ENCODE measurements at regions of chr1 and their contacts with region 1.

Region 1: GRCh38 chr1:1059494-1060280 is 14.4 kb downstream of the RNF223 start:
- DNase-seq: peak; percentile 94
- H3K4me3 Mint-ChIP-seq: peak overlapping the region; percentile 83
- H3K27ac Mint-ChIP-seq: no peak overlapping the region
- H3K4me1 Mint-ChIP-seq: peaks cover 28% of the 10 kb centered on the region
- H3K27me3 Mint-ChIP-seq: peaks cover 28% of the 10 kb centered on the region

Region 2: DNA sequence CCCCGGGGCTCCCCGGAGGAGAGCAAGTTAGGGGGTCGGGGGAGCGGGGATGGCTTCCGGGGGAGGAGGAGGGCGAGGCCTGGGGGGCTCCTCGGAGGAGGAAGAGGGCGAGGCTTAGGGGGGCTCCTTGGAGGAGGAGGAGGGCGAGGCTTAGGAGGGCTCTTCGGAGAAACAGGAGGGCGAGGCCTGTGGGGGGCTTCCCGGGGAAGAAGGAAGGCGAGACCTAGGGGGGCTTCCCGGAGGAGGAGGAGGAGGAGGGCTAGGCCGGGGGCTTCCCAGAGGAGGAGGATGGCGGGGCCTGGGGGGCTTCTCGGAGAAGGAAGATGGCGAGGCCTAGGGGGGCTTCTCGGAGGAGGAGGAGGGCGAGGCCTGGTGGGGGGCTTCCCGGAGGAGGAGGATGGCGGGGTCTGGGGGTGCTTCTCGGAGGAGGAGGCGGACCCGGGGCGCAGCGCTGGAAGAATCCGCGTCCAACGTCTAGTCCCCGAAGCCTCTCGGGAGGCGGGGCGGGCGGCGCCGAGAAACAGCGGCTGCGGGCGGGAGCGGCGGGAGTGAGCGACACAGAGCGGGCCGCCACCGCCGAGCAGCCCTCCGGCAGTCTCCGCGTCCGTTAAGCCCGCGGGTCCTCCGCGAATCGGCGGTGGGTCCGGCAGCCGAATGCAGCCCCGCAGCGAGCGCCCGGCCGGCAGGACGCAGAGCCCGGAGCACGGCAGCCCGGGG is 99.5 kb before region 1 on chr1 and contains the start of gene KLHL17:
- CTCF ChIA-PET with region 1: no interaction called
- POLR2A ChIA-PET with region 1: no interaction called
- intact Hi-C with region 1: loop called (anchors 10 kb)
- DNase-seq: peak; percentile 88
- H3K4me3 Mint-ChIP-seq: peak within 1 kb of the TSS; percentile 92
- H3K27ac Mint-ChIP-seq: no peak within 1 kb of the TSS
- H3K4me1 Mint-ChIP-seq: peaks cover 16% of the 10 kb centered on the region
- H3K27me3 Mint-ChIP-seq: no peaks in the 10 kb centered on the region
- total RNA-seq, gene KLHL17: 25.8 to 30.6 TPM

Region 3: DNA sequence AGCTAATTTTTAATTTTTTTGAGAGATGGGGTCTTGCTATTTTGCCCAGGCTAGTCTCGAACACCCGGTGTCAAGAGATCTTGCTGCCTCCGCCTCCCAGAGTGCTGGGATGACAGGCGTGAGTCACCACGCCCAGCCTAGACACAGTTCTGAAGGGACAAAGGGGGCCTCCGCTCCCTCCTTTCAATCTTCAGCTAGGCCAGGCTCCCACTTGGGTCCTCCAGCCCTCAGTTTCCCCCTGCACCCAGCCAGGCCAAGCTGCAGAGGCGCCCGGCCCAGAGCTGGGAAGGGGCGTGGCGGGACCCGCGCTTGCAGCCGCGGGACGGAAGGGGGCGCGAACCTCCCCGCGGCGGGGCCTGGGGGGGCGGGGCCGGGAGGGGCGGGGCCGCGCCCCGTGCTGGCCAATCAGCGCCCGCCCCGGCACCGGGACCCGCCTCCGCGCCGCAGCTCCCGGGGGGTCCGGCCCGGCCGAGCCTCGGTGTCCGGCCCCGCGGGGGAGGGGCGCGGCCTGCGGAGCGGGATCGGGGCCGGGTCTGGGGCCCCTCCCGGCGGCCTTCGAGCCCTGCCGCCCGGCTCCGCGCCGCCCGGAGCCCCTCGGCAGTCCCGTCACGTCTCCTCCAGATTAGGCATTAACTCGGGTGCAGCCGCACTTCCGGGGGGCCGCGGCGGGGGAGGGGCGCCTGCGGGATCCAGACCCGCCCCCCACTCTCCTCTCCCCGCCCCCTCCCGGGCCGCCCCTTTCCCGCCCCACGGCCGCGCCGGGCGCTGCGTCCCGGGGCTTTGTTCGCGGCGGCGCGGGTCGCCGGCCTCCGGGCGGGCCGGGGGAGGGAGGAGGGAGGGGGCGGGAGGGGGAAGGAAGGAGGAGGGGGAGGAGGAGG is 40.3 kb before region 1 on chr1:
- CTCF ChIA-PET with region 1: interaction called, 6 read pairs
- POLR2A ChIA-PET with region 1: no interaction called
- intact Hi-C with region 1: loop called (anchors 5 kb)
- DNase-seq: peak; percentile 83
- H3K4me3 Mint-ChIP-seq: peak overlapping the region; percentile 62
- H3K27ac Mint-ChIP-seq: no peak overlapping the region
- H3K4me1 Mint-ChIP-seq: peaks cover 8% of the 10 kb centered on the region
- H3K27me3 Mint-ChIP-seq: peaks cover 9% of the 10 kb centered on the region

Region 4: DNA sequence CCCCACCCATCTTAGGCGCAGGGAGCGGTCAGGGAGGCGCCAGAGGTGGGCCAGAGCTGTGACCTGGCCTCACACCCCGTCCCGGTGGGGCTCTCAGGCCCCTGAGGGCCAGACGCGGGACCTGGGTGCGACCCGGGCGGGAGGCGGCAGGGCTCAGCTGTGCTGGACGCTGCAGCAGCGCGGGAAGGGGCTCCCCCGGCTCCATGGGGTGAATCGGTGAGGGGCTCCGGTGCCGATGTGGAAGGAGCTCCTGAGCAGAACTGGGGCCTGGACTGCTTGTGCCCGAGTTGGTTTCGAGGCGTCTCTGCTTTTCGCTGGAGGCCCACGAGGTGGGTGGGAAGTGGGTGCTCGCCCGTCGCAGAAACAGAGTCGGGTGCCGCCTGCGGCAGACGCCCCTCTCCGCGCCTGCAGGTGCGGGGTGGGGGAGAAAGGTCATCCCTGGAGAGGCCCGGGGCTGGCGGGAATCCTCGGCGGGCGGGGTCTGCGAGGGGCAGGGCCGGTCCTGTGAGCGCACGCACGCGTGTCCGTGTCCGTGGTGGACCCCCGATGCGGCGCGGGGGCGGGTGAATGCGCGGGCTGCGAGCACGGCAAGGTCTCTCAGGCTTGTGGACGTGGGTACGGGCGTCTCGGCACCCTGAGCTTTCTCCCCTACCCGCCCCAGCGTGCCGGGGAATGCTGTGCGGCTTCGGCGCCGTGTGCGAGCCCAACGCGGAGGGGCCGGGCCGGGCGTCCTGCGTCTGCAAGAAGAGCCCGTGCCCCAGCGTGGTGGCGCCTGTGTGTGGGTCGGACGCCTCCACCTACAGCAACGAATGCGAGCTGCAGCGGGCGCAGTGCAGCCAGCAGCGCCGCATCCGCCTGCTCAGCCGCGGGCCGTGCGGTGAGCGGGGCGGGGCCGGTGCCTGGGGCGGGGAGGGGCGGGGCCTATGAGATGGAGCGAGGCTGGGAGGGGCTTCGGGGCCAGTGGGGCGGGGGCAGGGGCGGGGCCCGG is 19.4 kb before region 1 on chr1:
- CTCF ChIA-PET with region 1: interaction called, 15 read pairs
- POLR2A ChIA-PET with region 1: interaction called, 11 read pairs
- intact Hi-C with region 1: loop called (anchors 1 kb)
- DNase-seq: peak; percentile 90
- H3K4me3 Mint-ChIP-seq: peak overlapping the region; percentile 55
- H3K27ac Mint-ChIP-seq: no peak overlapping the region
- H3K4me1 Mint-ChIP-seq: peaks cover 15% of the 10 kb centered on the region
- H3K27me3 Mint-ChIP-seq: peaks cover 28% of the 10 kb centered on the region

Region 5: DNA sequence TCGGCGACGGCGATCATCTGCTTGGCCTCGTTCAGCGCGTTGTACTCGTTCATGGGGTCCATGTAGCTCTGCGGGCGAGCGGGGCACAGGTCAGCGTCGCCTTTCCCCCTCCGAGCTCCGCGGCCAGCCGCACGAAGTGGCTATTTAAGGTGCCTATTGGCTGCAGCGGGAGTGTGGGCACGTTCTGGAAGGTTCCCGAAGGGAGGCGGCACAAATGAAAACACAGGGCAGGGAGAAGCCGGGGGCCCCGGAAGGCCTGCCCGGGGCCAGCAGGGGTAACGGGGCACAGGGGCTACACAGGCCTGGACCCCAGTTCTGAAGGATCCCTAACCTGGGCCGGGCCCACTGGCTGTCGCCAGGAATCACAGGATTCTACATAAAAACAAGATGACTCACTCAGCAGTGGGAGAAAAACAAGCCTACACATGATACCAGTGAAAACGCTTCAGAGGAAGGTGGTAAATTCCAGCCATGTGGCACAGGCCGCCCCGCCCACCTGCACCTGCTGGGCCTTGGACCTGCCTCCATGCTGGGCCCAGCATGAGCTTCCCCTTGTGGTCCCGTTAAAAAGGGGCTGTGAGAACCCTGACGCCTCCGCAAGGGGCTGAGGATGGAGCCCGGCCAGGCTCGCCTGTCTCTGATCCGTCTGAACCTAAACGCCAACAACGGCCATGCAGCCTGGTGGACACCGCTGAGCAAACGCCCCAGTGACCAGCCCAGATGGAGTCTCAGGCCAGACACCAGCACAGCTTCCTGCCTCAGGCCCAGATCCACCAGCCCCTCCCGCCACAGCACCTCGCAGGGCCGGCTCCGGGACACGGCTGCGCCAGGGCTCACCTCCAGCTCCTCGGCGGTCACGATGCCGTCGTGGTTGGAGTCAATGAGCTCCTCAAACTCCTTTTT is 158.2 kb after region 1 on chr1:
- CTCF ChIA-PET with region 1: no interaction called
- POLR2A ChIA-PET with region 1: interaction called, 3 read pairs
- intact Hi-C with region 1: loop called (anchors 5 kb)
- DNase-seq: peak; percentile 84
- H3K4me3 Mint-ChIP-seq: peak overlapping the region; percentile 78
- H3K27ac Mint-ChIP-seq: peak overlapping the region; percentile 100
- H3K4me1 Mint-ChIP-seq: peaks cover 62% of the 10 kb centered on the region
- H3K27me3 Mint-ChIP-seq: no peaks in the 10 kb centered on the region

Region 6: DNA sequence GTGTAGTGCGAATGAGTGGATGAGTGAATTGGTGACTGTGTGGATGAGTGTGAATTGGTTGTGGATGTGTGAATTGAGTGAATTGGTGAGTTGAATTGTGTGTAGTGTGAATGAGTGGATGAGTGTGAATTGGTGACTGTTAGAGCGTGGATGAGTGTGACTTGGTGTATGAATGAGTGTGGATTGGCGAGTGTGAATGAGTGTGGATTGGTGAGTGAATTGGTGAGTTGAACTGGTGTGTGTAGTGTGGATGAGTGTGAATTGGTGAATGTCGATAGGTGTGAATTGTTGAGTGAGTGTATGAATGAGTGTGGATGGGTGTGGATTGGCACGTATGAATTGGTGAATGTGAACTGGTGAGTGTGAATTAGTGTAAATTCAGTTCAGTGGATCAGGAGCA is 307.6 kb after region 1 on chr1:
- CTCF ChIA-PET with region 1: no interaction called
- POLR2A ChIA-PET with region 1: no interaction called
- intact Hi-C with region 1: no loop called
- DNase-seq: no peak
- H3K4me3 Mint-ChIP-seq: no peak overlapping the region
- H3K27ac Mint-ChIP-seq: no peak overlapping the region
- H3K4me1 Mint-ChIP-seq: peaks cover 5% of the 10 kb centered on the region
- H3K27me3 Mint-ChIP-seq: no peaks in the 10 kb centered on the region

Region 7: GRCh38 chr1:1471389-1472052 is 411.8 kb after region 1 on chr1 and contains the start of gene ATAD3B:
- CTCF ChIA-PET with region 1: no interaction called
- POLR2A ChIA-PET with region 1: no interaction called
- intact Hi-C with region 1: no loop called
- DNase-seq: peak; percentile 97
- H3K4me3 Mint-ChIP-seq: peak within 1 kb of the TSS; percentile 80
- H3K27ac Mint-ChIP-seq: peak within 1 kb of the TSS; percentile 49
- H3K4me1 Mint-ChIP-seq: peaks cover 26% of the 10 kb centered on the region
- H3K27me3 Mint-ChIP-seq: no peaks in the 10 kb centered on the region
- total RNA-seq, gene ATAD3B: 35.4 to 36.3 TPM